ENCODE measurements at regions of chr7 and their contacts with region 1.

Region 1: GRCh38 chr7:105759670-105760550 is 116.5 kb downstream of the ATXN7L1 start:
- DNase-seq: peak; percentile 37
- H3K4me3 ChIP-seq: no peak overlapping the region
- H3K27ac ChIP-seq: no peak overlapping the region
- H3K4me1 ChIP-seq: no peaks in the 10 kb centered on the region
- H3K27me3 ChIP-seq: no peaks in the 10 kb centered on the region
- CTCF ChIP-seq: peak; percentile 60 to 68

Region 2: DNA sequence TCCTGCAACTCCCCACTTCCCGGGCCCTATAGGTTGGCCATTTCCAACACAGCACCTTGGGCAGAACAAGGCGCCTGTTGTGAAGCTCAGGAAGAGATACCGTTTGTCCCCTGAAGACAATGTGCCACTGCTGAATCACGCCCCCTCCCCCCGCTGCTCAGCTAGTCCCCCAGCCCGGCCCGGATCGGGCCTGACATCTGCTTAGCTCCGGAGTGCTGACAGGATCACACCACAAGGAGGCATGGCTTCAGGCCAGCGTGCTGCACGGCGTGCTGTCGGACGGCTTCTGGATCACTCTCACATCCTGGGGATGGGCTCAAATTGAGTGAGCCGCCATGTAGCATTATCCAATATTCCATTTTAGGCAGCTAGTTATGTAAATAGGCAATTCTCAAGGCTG is 116.5 kb before region 1 on chr7:
- CTCF ChIA-PET with region 1: no interaction called
- dilution Hi-C with region 1: no loop called
- in situ Hi-C with region 1: no loop called
- intact Hi-C with region 1: no loop called
- DNase-seq: no peak
- H3K4me3 ChIP-seq: no peak overlapping the region
- H3K27ac ChIP-seq: no peak overlapping the region
- H3K4me1 ChIP-seq: no peaks in the 10 kb centered on the region
- H3K27me3 ChIP-seq: no peaks in the 10 kb centered on the region
- CTCF ChIP-seq: no peak

Region 3: DNA sequence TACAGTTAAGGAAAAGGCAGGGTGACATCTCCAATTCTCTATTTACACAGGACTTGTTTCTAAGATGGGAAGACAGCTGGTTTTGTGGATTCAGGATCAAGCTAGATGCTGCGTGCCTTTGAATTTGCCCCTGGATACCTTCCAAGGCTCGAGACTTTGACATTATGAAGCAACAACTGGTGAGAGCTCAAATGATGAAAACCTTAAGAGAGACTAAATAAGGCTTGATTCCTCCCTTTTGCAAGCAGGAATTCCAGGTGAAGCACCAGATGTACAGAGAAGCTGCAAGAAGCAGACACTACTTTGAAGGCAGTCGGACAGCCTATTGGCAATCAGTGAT is 35.5 kb after region 1 on chr7:
- CTCF ChIA-PET with region 1: no interaction called
- dilution Hi-C with region 1: no loop called
- in situ Hi-C with region 1: no loop called
- intact Hi-C with region 1: no loop called
- DNase-seq: no peak
- H3K4me3 ChIP-seq: no peak overlapping the region
- H3K27ac ChIP-seq: no peak overlapping the region
- H3K4me1 ChIP-seq: peaks cover 40% of the 10 kb centered on the region
- H3K27me3 ChIP-seq: no peaks in the 10 kb centered on the region
- CTCF ChIP-seq: no peak

Region 4: GRCh38 chr7:105934572-105935185 is 174.8 kb after region 1 on chr7:
- CTCF ChIA-PET with region 1: no interaction called
- dilution Hi-C with region 1: no loop called
- in situ Hi-C with region 1: no loop called
- intact Hi-C with region 1: loop called (anchors 2 kb)
- DNase-seq: peak; percentile 12
- H3K4me3 ChIP-seq: no peak overlapping the region
- H3K27ac ChIP-seq: no peak overlapping the region
- H3K4me1 ChIP-seq: peaks cover 14% of the 10 kb centered on the region
- H3K27me3 ChIP-seq: no peaks in the 10 kb centered on the region
- CTCF ChIP-seq: peak in 1 of 2 donors; percentile 30

Region 5: DNA sequence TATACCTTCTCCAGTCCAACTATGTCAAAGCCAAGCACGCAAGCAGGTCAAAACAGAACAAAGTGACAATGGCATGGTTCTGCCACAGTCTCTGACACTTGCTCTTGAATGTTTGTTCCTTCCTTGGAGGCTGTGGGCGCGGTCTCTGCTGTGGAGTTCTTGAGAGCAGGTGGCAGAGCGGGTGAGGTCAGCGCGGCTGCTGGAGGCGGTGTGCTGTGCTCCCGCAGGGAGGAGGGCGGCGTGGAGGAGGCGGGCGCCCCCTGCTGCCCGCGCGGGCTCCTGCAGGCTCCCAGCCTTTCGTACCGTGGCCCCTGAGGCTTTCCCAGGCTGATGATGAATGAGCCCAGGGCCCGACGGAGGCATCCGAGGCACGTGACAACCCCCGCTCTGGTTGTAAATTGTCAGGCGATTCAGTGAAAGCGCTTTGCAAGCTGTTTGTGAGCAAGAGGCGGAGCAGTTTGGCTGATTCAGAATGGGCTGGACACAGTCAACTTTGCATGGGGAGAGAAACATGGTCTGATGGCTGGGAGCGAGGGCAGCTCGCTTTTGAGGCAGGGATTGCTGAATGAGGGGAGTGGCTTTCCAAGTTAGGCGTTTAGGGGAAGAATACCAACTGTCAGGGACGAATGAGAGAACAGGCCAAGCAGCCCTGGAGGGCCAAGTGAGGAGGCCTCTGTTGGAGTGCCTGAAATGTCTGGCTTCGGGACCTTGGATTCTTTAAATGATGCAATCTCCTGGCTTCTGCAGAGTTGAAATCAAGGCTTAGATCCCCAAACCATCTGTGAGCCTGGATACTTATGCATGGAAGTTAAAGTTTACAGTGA is 249.7 kb after region 1 on chr7:
- CTCF ChIA-PET with region 1: no interaction called
- dilution Hi-C with region 1: no loop called
- in situ Hi-C with region 1: loop called (anchors 10 kb)
- intact Hi-C with region 1: loop called (anchors 1 kb)
- DNase-seq: peak; percentile 88
- H3K4me3 ChIP-seq: no peak overlapping the region
- H3K27ac ChIP-seq: no peak overlapping the region
- H3K4me1 ChIP-seq: peaks cover 8% of the 10 kb centered on the region
- H3K27me3 ChIP-seq: no peaks in the 10 kb centered on the region
- CTCF ChIP-seq: peak; percentile 74 to 96

Region 6: GRCh38 chr7:106031300-106032035 is 271.6 kb after region 1 on chr7:
- CTCF ChIA-PET with region 1: no interaction called
- dilution Hi-C with region 1: loop called (anchors 5 kb)
- in situ Hi-C with region 1: no loop called
- intact Hi-C with region 1: no loop called
- DNase-seq: no peak
- H3K4me3 ChIP-seq: no peak overlapping the region
- H3K27ac ChIP-seq: no peak overlapping the region
- H3K4me1 ChIP-seq: no peaks in the 10 kb centered on the region
- H3K27me3 ChIP-seq: no peaks in the 10 kb centered on the region
- CTCF ChIP-seq: no peak

Region 7: DNA sequence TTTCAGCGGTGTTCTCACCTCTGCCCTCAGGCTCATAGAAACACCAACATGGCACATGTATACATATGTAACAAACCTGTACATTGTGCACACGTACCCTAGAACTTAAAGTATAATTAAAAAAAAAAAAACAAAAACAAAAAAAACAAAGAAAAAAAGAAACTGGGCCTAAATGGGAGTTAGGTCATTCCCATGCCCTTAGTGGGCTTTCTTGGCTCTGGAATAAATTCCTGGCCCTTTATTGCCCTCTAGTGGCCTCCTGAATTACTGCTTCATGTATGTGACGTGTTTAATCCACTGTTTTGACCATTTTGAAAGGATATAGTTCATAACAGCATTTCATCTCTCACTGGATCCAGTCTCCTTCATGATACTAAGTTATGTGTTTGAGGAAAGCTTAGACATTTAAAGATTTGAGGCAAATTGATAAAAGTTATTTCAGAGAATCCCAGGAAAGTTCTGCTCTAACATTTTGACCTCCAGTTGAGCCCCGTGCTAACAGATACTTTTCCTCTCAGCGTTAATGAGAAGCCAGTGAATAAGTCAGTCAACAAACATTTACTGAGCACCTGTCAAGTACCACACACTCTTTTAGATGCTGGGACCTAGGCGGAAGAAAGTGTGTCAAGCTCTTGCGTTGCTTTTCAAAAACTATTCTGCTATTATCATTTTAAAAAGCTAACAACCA is 406.9 kb after region 1 on chr7:
- CTCF ChIA-PET with region 1: no interaction called
- dilution Hi-C with region 1: no loop called
- in situ Hi-C with region 1: loop called (anchors 25 kb)
- intact Hi-C with region 1: loop called (anchors 2 kb)
- DNase-seq: peak; percentile 40
- H3K4me3 ChIP-seq: no peak overlapping the region
- H3K27ac ChIP-seq: no peak overlapping the region
- H3K4me1 ChIP-seq: no peaks in the 10 kb centered on the region
- H3K27me3 ChIP-seq: no peaks in the 10 kb centered on the region
- CTCF ChIP-seq: peak; percentile 76 to 82